Activated CD4-positive, alpha-beta T cell treated with anti-CD3 and anti-CD28 coated beads for 36 hours (primary cell): ENCODE measurements at regions of chr16 and their contacts with region 1.

Region 1: DNA sequence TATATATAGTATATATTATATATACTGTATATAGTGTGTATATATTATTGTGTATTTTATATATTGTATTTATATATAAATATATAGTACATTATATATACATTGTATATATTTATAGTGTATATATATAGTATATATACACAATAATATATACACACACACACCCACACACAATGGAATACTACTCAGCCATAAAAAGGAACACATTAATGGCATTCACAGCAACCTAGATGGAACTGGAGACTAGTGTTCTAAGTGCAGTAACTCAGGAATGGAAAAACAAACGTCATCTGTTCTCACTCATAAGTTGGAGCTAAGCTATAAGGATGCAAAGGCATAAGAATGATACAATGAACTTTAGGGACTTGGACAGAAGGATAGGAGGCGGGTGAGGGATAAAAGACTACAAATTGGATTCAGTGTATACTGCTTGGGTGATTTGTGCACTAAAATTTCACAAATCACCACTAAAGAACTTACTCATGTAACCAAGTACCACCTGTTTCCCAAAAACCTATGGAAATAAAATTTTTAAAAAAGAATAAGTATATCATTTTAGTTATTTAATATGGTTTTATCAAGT is 201.9 kb upstream of the CDH11 start:
- DNase-seq: no peak
- ATAC-seq: peak; percentile 55
- H3K4me3 Mint-ChIP-seq: no peak overlapping the region
- H3K27ac Mint-ChIP-seq: no peak overlapping the region
- H3K4me1 Mint-ChIP-seq: no peaks in the 10 kb centered on the region
- H3K27me3 Mint-ChIP-seq: no peaks in the 10 kb centered on the region

Region 2: GRCh38 chr16:64925166-64925565 is 398.6 kb before region 1 on chr16:
- CTCF ChIA-PET with region 1: no interaction called
- POLR2A ChIA-PET with region 1: no interaction called
- intact Hi-C with region 1: no loop called
- DNase-seq: no peak
- ATAC-seq: no peak
- H3K4me3 Mint-ChIP-seq: no peak overlapping the region
- H3K27ac Mint-ChIP-seq: no peak overlapping the region
- H3K4me1 Mint-ChIP-seq: no peaks in the 10 kb centered on the region
- H3K27me3 Mint-ChIP-seq: no peaks in the 10 kb centered on the region

Region 3: DNA sequence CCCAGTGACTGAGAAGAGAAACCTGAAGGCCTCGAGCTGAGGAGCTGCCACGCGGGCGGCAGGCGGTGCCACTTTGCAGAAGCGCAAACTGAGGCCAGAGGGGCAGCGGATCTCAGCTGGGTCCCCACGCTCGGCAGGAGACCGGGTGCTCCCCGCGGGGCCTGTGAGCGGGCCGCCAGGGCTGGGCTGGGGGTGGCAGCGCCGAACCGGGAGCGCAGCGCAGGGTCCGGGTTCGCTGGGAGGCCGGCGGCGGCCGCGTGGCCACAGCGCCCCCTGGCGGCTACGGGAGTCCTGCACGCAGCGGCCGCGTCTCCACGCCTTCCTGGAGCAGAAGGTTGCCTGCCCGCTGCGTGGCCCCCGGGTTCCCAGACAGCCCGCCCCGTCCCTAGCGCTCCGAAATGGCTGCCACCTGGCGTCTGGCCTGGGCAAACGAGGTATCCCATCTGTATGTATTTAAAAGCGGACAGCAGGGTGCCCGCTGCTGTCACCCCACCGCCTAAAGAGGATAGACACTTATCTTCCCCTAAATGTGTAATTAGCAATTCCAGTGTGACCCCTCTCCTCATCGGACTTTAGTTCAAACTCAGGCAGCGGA is 946.7 kb after region 1 on chr16:
- CTCF ChIA-PET with region 1: no interaction called
- POLR2A ChIA-PET with region 1: no interaction called
- intact Hi-C with region 1: loop called in 1 of 2 experiments (anchors 10 kb)
- DNase-seq: peak; percentile 82
- ATAC-seq: peak; percentile 84
- H3K4me3 Mint-ChIP-seq: no peak overlapping the region
- H3K27ac Mint-ChIP-seq: no peak overlapping the region
- H3K4me1 Mint-ChIP-seq: peaks cover 13% of the 10 kb centered on the region
- H3K27me3 Mint-ChIP-seq: peaks cover 35% of the 10 kb centered on the region